ENCODE measurements at regions of chr14 and their contacts with region 1.

Region 1: DNA sequence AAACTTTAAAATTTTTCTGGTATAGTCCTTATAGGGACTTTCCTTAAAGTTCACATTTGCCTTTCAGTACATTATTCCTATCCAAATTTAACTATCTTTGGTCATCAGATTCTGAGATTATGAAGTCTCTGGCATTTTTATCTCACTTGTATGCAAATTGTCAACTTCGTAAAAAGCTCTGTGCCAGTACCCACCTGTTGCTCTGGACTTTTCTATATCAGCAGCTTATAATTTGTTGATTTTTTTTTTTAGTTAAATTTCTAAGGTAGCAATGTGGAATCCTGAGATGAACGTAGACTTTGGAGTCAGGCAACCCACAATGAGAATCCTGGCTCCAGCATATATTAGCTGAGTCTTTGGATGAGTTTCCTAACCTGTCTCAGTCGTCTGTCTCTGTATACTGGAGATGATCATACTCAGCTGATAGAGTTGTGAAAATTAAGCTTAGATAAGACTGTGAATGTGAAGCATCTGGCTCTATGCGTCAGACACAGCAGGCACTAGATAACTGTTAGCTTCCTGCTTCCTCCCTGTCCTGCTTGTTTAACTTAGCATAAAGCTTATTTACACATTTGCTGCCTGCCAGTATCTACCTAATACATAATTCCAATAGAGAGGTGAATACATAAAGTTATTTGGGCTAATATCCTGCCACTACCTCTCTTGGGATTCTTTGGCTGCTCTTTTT is 59.8 kb downstream of the MARK3 start:
- DNase-seq: no peak
- H3K4me3 ChIP-seq: no peak overlapping the region
- H3K4me3 Mint-ChIP-seq: no peak overlapping the region
- H3K27ac Mint-ChIP-seq: no peak overlapping the region
- H3K4me1 ChIP-seq: peaks cover 9% of the 10 kb centered on the region
- H3K4me1 Mint-ChIP-seq: peaks cover 24% of the 10 kb centered on the region
- H3K27me3 ChIP-seq: no peaks in the 10 kb centered on the region
- H3K27me3 Mint-ChIP-seq: no peaks in the 10 kb centered on the region
- CTCF ChIP-seq: no peak

Region 2: DNA sequence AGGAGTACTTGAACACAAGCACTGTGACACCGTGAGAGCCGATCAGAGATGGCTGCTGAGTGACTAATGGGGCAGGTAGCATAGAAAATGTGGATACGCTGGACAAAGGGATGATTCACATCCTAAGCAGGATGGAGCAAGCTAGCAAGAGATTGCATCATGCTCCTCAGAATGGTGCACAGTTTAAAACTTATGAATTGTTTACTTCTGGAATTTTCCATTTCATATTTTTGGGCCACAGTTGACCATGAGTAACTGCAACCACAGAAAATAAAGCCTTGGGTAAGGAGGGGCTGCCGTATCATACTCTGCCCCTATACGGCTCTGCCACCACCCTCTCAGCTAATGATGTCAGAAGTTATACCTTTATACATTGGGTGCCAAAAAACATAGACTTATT is 83.1 kb before region 1 on chr14:
- CTCF ChIA-PET with region 1: no interaction called
- POLR2A ChIA-PET with region 1: no interaction called
- intact Hi-C with region 1: no loop called
- DNase-seq: no peak
- H3K4me3 ChIP-seq: no peak overlapping the region
- H3K4me3 Mint-ChIP-seq: no peak overlapping the region
- H3K27ac Mint-ChIP-seq: no peak overlapping the region
- H3K4me1 ChIP-seq: no peaks in the 10 kb centered on the region
- H3K4me1 Mint-ChIP-seq: no peaks in the 10 kb centered on the region
- H3K27me3 ChIP-seq: no peaks in the 10 kb centered on the region
- H3K27me3 Mint-ChIP-seq: peaks cover 3% of the 10 kb centered on the region
- CTCF ChIP-seq: no peak

Region 3: GRCh38 chr14:103418481-103418818 is 26.5 kb before region 1 on chr14:
- CTCF ChIA-PET with region 1: no interaction called
- POLR2A ChIA-PET with region 1: interaction called, 10 read pairs
- intact Hi-C with region 1: no loop called
- DNase-seq: no peak
- H3K4me3 ChIP-seq: no peak overlapping the region
- H3K4me3 Mint-ChIP-seq: no peak overlapping the region
- H3K27ac Mint-ChIP-seq: no peak overlapping the region
- H3K4me1 ChIP-seq: 0 out of 2 replicates have a peak, but pooled peaks cover 2% of the 10 kb centered on the region
- H3K4me1 Mint-ChIP-seq: peaks cover 16% of the 10 kb centered on the region
- H3K27me3 ChIP-seq: no peaks in the 10 kb centered on the region
- H3K27me3 Mint-ChIP-seq: no peaks in the 10 kb centered on the region
- CTCF ChIP-seq: no peak

Region 4: DNA sequence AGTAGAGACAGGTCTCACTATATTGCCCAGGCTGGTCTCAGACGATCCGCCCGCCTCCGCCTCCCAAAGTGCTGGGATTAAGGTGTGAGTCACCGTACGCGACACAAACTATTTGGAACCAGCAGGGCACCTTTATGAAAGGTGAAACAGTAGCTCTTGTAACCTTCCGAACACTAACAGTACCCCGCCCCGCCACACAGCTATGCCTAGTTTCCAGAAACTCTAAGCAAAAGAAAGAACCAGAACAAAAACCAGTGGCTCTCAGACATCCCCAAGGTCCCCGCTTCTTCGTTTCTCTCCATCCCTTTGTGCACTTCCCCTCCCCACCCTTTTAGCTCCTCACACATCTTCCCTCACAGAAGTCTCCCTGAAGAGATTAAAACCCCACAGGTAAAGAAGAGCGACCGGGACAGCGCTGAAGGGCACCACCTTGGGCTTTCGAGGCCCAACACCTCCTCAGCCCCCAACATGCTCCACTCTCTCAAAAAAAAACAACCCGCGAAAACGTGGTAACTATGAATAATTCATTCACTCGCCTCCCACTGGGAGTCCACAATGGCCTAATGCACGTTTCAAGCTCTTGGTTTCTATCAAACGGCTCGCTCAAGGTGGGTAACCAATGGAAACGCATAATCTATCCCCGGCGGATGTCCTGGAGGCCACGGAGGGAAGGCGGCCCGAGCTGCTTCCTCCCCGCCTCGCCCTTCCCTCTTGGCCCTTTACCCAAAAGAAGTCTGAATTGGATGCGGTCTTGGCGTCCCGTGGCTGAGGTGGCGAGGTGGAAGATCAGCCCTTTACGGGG is 116.6 kb after region 1 on chr14:
- CTCF ChIA-PET with region 1: no interaction called
- POLR2A ChIA-PET with region 1: no interaction called
- intact Hi-C with region 1: no loop called
- DNase-seq: peak; percentile 41 to 46
- H3K4me3 ChIP-seq: peak overlapping the region; percentile 96
- H3K4me3 Mint-ChIP-seq: peak overlapping the region; percentile 99
- H3K27ac Mint-ChIP-seq: peak overlapping the region; percentile 93
- H3K4me1 ChIP-seq: peaks cover 4% of the 10 kb centered on the region; the same call in 1 of the 2 replicates
- H3K4me1 Mint-ChIP-seq: no peaks in the 10 kb centered on the region
- H3K27me3 ChIP-seq: no peaks in the 10 kb centered on the region
- H3K27me3 Mint-ChIP-seq: no peaks in the 10 kb centered on the region
- CTCF ChIP-seq: no peak